Activated B cell treated with CpG ODN at 0.5 μM for 24 hours (primary cell): ENCODE measurements at regions of chr6 and their contacts with region 1.

Region 1: GRCh38 chr6:141562851-141563763 is 569.6 kb upstream of the GJE1 start:
- DNase-seq: no peak
- ATAC-seq: peak; percentile 97
- H3K4me3 Mint-ChIP-seq: peak overlapping the region; percentile 78
- H3K27ac Mint-ChIP-seq: peak overlapping the region; percentile 76
- H3K4me1 Mint-ChIP-seq: peaks cover 10% of the 10 kb centered on the region
- H3K27me3 Mint-ChIP-seq: peaks cover 2% of the 10 kb centered on the region
- CTCF ChIP-seq: no peak

Region 2: DNA sequence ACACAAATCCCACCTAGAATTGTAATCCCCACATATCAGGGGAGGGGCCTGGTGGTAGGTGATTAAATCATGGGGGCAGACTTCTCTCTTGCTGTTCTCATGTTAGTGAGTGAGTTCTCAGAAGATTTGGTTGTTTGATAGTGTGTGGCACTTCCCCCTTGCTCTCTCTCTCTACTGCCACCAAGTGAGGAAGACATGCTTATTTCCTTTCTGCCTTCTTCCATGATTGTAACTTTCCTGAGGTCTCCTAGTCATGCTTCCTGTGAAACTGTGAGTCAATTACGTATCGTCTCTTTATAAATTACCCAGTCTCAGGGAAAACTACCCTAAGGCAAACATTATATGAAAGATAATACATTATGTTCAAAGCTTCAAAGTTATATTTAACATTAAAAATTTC is 891.2 kb before region 1 on chr6:
- CTCF ChIA-PET with region 1: no interaction called
- POLR2A ChIA-PET with region 1: no interaction called
- intact Hi-C with region 1: loop called (anchors 10 kb)
- DNase-seq: no peak
- ATAC-seq: no peak
- H3K4me3 Mint-ChIP-seq: no peak overlapping the region
- H3K27ac Mint-ChIP-seq: no peak overlapping the region
- H3K4me1 Mint-ChIP-seq: no peaks in the 10 kb centered on the region
- H3K27me3 Mint-ChIP-seq: no peaks in the 10 kb centered on the region
- CTCF ChIP-seq: no peak

Region 3: GRCh38 chr6:141056945-141057625 is 506.0 kb before region 1 on chr6:
- CTCF ChIA-PET with region 1: no interaction called
- POLR2A ChIA-PET with region 1: no interaction called
- intact Hi-C with region 1: loop called (anchors 10 kb)
- DNase-seq: no peak
- ATAC-seq: no peak
- H3K4me3 Mint-ChIP-seq: no peak overlapping the region
- H3K27ac Mint-ChIP-seq: no peak overlapping the region
- H3K4me1 Mint-ChIP-seq: no peaks in the 10 kb centered on the region
- H3K27me3 Mint-ChIP-seq: no peaks in the 10 kb centered on the region
- CTCF ChIP-seq: no peak

Region 4: DNA sequence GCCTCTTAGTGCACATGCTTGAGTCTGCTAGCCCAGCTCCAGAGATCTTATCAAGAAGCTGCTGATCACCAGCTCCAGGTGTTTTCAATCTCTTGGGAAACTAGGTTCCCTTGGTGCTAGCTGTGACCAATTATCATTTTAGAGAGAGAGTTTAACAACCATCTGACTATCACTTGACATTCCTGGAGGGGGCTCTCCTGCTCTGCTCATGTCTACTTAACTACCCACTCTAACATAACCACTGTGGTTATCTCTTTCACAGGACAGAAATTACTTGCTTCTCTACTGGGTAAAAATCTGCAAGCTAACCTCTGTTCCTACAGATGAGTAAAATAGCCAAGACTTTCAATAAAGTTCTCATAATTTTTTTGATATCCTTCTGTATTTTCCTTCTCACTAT is 253.8 kb before region 1 on chr6:
- CTCF ChIA-PET with region 1: interaction called, 10 read pairs
- POLR2A ChIA-PET with region 1: no interaction called
- intact Hi-C with region 1: loop called (anchors 1 kb)
- DNase-seq: no peak
- ATAC-seq: peak; percentile 54
- H3K4me3 Mint-ChIP-seq: no peak overlapping the region
- H3K27ac Mint-ChIP-seq: no peak overlapping the region
- H3K4me1 Mint-ChIP-seq: peaks cover 4% of the 10 kb centered on the region
- H3K27me3 Mint-ChIP-seq: no peaks in the 10 kb centered on the region
- CTCF ChIP-seq: no peak

Region 5: GRCh38 chr6:141552473-141552878 is 10.6 kb before region 1 on chr6:
- CTCF ChIA-PET with region 1: interaction called, 3 read pairs
- POLR2A ChIA-PET with region 1: no interaction called
- intact Hi-C with region 1: loop called (anchors 1 kb)
- DNase-seq: no peak
- ATAC-seq: peak; percentile 40
- H3K4me3 Mint-ChIP-seq: no peak overlapping the region
- H3K27ac Mint-ChIP-seq: no peak overlapping the region
- H3K4me1 Mint-ChIP-seq: peaks cover 17% of the 10 kb centered on the region
- H3K27me3 Mint-ChIP-seq: no peaks in the 10 kb centered on the region
- CTCF ChIP-seq: no peak